Dendritic cell treated with granulocyte-macrophage colony-stimulating factor and Interleukin-4, amounts not matched to agents 40 ng/mL and 50 ng/mL, for 4 days (primary cell): ENCODE measurements at regions of chr4 and their contacts with region 1.

Region 1: DNA sequence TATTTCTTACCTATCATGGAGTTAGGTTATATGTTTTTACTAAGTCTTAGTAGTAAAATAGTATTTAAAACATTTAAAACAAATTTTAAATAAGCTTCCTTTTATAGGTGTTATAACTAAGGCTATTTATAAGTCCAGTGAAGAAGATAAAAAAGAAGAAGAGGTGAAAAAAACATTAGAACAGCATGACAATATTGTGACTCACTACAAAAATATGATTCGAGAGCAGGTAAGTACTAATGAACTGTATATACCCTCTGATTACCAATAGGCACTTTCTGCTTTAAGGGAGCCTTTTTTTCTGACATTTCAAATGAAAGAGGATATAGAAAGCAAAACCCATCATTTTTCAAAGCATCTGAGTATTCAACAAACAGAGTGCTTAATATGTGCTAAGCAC is 76.6 kb downstream of the USO1 start:
- H3K4me3 Mint-ChIP-seq: no peak overlapping the region
- H3K27ac Mint-ChIP-seq: no peak overlapping the region
- H3K4me1 Mint-ChIP-seq: no peaks in the 10 kb centered on the region
- H3K27me3 Mint-ChIP-seq: no peaks in the 10 kb centered on the region

Region 2: DNA sequence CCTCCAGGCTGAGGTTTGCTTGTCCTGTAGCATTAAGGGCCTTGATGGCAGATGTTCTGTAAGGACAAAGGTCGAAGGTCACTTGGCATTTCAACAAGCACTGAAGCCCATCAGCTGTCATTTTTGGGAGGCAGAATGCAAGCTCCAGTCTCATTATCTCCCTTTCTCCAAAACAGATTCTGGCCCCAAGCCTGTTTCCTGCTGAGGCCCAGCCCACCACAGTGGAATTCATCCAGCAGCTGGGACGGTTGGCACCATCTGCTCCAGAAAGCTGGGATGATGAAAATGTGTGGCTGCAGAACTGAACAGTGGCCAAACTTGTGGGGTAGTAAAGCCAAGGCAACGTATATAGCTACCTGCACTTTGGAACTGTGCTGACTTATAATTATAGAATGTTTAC is 118.9 kb after region 1 on chr4:
- intact Hi-C with region 1: loop called (anchors 10 kb)
- H3K4me3 Mint-ChIP-seq: no peak overlapping the region
- H3K27ac Mint-ChIP-seq: no peak overlapping the region
- H3K4me1 Mint-ChIP-seq: no peaks in the 10 kb centered on the region
- H3K27me3 Mint-ChIP-seq: no peaks in the 10 kb centered on the region

Region 3: GRCh38 chr4:75973766-75974165 is 172.8 kb after region 1 on chr4:
- intact Hi-C with region 1: loop called (anchors 10 kb)
- H3K4me3 Mint-ChIP-seq: no peak overlapping the region
- H3K27ac Mint-ChIP-seq: no peak overlapping the region
- H3K4me1 Mint-ChIP-seq: peaks cover 6% of the 10 kb centered on the region
- H3K27me3 Mint-ChIP-seq: no peaks in the 10 kb centered on the region